Thyroid gland (tissue), 4 donors: ENCODE measurements at regions of chr5 and their contacts with region 1.

Region 1: GRCh38 chr5:167049043-167049663 is 1242.3 kb upstream of the WWC1 start:
- DNase-seq: peak; percentile 53 to 56
- H3K4me3 ChIP-seq: no peak overlapping the region
- H3K27ac ChIP-seq: no peak overlapping the region
- H3K4me1 ChIP-seq: peaks cover 0 to 3% of the 10 kb centered on the region in 2 donors
- H3K27me3 ChIP-seq: no peaks in the 10 kb centered on the region
- CTCF ChIP-seq: peak; percentile 39 to 75 (median 62)
- POLR2A ChIP-seq: no peak

Region 2: DNA sequence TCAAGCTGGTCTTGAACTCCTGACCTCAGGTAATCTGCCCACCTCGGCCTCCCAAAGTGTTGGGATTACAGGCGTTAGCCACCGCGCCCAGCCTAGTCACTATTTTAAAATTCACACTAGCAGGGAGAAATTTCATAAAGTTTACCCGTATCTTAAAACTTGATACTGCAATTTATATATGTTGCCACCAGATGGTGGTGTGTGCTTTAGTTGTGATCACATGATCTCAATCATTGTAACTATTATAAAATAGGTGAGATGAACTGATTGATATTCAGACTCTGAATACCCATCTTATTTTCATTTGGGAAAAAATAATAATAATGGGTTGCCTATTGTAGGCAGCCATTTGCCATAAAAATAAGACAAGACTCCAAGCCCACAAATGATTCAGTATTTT is 88.1 kb before region 1 on chr5:
- intact Hi-C with region 1: loop called (anchors 5 kb)
- DNase-seq: no peak
- H3K4me3 ChIP-seq: no peak overlapping the region
- H3K27ac ChIP-seq: no peak overlapping the region
- H3K4me1 ChIP-seq: no peaks in the 10 kb centered on the region
- H3K27me3 ChIP-seq: no peaks in the 10 kb centered on the region
- CTCF ChIP-seq: peak in 3 of 6 experiments; percentile 33 to 45 (median 37)
- POLR2A ChIP-seq: no peak